Posterior cingulate gyrus (tissue), 11 donors: ENCODE measurements at regions of chr11 and their contacts with region 1.

Region 1: DNA sequence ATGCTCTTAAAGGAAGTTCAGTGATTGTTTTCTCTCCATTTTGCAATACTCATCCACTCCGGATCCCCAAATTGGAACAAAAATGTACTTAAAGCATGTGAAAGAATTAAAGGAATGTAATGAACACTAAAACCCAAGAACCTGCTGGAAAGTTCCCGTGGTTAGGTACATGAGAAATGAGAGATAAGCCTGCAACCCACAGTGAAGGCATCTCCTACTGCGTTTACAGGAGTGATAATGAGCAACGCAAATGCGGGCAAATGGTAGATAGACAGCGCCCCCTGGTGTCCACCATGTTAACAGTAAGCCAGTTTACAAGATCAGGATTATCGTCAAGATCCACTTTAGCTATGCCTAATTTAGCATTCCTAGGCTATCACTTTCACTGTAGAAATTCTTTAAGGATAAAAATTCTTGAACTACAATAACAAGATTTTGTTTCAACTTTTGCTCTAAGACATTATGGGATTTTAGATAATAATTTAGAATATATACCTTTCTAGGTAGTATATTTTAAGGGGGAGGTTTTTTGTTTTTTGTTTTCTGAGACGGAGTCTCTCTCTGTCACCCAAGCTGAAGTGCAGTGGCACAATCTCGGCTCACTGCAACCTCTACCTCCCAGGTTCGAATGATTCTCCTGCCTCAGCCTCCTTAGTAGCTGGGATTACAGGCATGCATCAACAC is 29.9 kb downstream of the ALG9 start:
- DNase-seq: peak; percentile 73 to 98 (median 93)

Region 2: GRCh38 chr11:111565114-111565720 is 276.3 kb before region 1 on chr11:
- intact Hi-C with region 1: loop called (anchors 2 kb)
- DNase-seq: peak in 9 of 10 donors; percentile 30 to 88 (median 64)

Region 3: DNA sequence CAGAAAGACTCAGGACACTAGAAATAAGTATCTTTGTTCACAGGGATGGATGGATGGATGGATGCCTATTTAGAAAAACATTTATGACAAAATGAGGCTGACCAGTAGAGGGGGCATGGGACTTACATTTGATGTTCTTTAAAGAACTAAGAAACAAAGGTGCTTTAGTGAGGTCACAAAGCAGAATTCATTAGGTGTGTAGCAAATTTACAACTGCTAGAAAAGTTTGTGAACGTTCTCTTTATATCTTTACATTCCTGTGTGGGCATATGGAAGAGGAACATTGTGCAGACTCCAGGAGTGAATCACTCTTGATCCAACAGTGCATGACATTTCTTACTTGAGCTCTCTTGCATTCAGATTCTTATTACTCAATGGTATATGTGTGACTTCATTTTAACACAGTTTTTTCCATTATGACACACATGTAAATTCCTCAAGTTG is 255.1 kb before region 1 on chr11:
- intact Hi-C with region 1: loop called (anchors 5 kb)
- DNase-seq: no peak

Region 4: GRCh38 chr11:111601979-111602864 is 239.3 kb before region 1 on chr11 and contains the start of gene SIK2:
- intact Hi-C with region 1: loop called (anchors 1 kb)
- DNase-seq: peak; percentile 86 to 99 (median 95)

Region 5: DNA sequence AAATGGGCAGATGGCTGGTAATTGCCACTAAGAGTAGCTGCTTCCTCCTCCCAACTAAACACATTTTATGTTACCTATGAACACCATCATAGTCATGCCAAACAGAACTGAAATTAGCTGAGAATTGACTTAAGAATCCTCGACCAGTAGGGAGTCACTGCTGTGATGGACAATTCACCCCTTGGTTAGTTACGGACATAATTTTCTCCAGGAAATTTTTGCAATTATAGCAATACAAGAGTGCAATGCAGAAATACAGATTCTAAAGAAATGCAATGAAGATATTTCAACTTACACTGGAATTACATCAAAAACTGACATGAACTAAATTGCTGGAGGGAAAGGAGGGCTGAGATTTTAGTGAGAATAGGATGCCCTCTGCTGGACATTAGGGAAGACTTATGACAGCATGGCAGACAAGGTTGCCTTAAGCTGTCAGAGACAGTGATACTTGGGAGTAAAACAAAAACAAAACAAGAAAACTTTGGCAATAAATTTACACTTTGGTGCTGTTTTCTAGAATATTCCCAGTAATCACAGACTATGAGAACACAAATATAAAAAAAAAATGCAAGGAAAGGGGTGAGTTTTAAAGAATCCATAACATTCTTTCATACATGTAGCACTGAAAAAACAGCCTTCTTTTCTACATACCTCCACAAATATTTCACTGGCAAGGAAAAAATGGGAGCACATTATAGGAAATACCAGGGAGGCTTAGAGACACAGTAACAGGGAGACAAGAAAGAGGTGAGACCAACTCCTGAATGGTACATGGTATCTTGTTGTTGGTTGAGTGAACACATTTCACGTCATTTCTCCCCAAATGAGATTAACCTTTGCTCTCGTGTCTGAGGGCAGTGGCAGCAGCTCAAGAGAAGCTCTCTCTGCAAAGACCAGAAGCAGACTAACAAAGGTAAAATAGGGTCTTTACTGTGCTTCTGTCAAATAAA is 64.1 kb before region 1 on chr11:
- intact Hi-C with region 1: loop called (anchors 5 kb)
- DNase-seq: peak in 2 of 10 donors; percentile 22 to 41

Region 6: GRCh38 chr11:111797145-111797581 is 44.3 kb before region 1 on chr11:
- intact Hi-C with region 1: no loop called
- DNase-seq: no peak